Gastrocnemius medialis (tissue), 4 donors: ENCODE measurements at regions of chr2 and their contacts with region 1.

Region 1: DNA sequence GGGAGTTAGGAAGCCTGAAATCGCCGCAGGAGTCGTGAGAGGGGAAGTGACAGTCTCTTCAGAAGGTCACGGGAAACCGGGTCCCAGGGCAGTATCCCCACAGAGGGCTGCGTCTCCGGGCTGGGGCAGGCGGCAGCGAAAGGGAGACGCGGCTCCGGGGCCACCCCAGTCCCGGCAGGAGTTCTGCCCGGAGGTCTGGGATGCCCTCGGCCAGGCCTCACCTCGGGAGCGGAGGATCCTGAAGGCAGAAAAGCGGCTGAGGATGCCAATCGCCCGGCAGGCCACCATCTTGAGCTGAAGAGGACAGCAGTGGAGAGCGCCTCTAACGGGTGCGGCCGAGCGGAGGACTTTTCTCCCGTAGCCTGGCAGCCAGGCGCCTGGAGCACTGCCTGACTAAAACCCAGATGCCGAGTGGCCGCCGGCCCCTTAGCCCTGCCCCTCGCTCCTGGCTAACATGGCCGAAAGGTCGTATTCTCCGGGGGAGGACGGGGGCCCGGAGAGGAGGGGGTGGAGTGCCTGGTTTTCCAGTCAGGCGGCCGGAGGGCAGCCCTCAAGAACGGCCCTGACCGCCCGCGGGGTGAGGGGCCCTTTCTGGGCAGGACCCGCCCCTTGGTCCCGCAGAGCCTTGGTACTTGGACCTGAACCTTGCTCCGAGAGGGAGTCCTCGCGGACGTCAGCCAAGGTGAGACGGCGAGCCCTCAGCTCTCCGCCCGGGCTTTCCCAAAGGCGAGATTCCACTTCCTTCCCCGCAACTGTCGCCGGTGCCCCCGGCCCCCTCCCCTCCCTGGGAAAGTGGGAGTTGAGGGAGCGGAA is at the starts of genes HADHA and HADHB:
- DNase-seq: peak; percentile 91 to 95
- ATAC-seq: peak; percentile 74 to 80
- H3K4me3 ChIP-seq: peak within 1 kb of the TSS; percentile 85 to 96 (median 92)
- H3K27ac ChIP-seq: peak within 1 kb of the TSS; percentile 95 to 98 (median 97)
- H3K4me1 ChIP-seq: peaks cover 50 to 63% of the 10 kb centered on the region in 2 donors
- H3K27me3 ChIP-seq: no peaks in the 10 kb centered on the region
- CTCF ChIP-seq: peak in 3 of 5 experiments; percentile 31 to 47 (median 41)
- POLR2A ChIP-seq: peak; percentile 87 to 91
- total RNA-seq, gene HADHA: 443 to 480 (median 462) TPM
- total RNA-seq, gene HADHB: 719 to 936 (median 781) TPM

Region 2: DNA sequence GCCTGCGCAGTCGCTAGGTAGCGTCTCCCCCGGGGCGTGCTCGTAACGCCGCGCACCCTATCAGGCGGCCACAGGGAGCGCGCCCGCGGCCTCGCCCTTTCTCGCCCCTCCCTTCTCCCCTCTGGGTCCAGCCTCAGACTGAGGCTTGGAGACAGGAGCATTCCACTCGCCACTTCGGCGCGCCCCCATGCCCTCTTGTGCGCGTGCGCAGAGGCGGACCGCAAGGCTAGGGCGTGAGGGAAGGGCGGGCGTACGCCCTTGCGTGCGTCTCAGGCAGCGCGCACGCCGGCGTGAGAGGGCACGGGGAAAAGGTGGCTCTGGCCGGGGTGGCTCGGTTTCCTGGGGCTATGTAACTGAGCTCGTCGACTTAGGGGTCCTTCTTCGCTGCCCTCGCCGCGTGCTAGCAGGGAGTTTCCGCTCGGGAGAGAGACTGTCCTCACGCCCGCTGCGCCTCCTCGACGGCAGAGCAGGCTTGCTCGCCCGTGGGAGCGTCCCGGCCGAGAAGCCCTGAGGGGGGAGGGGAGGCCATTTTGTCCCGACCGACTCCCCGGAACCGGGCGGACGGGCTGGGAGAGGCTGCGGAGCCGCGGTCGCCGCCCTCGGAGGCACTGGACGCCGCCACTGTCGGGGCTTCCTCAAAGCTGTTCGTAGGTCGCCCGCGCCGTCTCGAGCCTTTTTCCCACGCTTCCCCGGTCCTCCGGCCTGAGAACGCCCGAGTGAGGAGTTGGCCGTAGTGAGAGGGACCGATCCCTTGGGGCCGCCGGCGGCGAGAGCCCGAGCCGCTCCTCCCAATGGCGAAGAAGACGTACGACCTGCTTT is 210.5 kb before region 1 on chr2 and contains the start of gene RAB10:
- in situ Hi-C with region 1: no loop called
- intact Hi-C with region 1: loop called (anchors 2 kb)
- DNase-seq: peak; percentile 98 to 99
- ATAC-seq: peak; percentile 82 to 85
- H3K4me3 ChIP-seq: peak within 1 kb of the TSS; percentile 83 to 99 (median 92)
- H3K27ac ChIP-seq: peak within 1 kb of the TSS; percentile 99 to 100 (median 99)
- H3K4me1 ChIP-seq: peaks cover 29 to 38% of the 10 kb centered on the region in 2 donors
- H3K27me3 ChIP-seq: no peaks in the 10 kb centered on the region
- CTCF ChIP-seq: peak in 2 of 5 experiments; percentile 17 to 21
- POLR2A ChIP-seq: peak; percentile 99 to 100
- total RNA-seq, gene RAB10: 138 to 234 (median 168) TPM

Region 3: GRCh38 chr2:26122630-26123029 is 121.9 kb before region 1 on chr2:
- in situ Hi-C with region 1: no loop called
- intact Hi-C with region 1: no loop called
- DNase-seq: no peak
- ATAC-seq: peak; percentile 31 to 45
- H3K4me3 ChIP-seq: peak overlapping the region in 1 of 4 donors; percentile 17
- H3K27ac ChIP-seq: peak overlapping the region; percentile 77 to 95 (median 86)
- H3K4me1 ChIP-seq: peaks cover 83 to 85% of the 10 kb centered on the region in 2 donors
- H3K27me3 ChIP-seq: no peaks in the 10 kb centered on the region
- CTCF ChIP-seq: no peak
- POLR2A ChIP-seq: no peak

Region 4: GRCh38 chr2:26274058-26274613 is 29.6 kb after region 1 on chr2:
- in situ Hi-C with region 1: no loop called
- intact Hi-C with region 1: loop called (anchors 1 kb)
- DNase-seq: peak; percentile 64 to 81
- ATAC-seq: peak; percentile 96 to 98
- H3K4me3 ChIP-seq: peak overlapping the region in 2 of 4 donors; percentile 8 to 15
- H3K27ac ChIP-seq: peak overlapping the region; percentile 81 to 84 (median 82)
- H3K4me1 ChIP-seq: peaks cover 32 to 35% of the 10 kb centered on the region in 2 donors
- H3K27me3 ChIP-seq: no peaks in the 10 kb centered on the region
- CTCF ChIP-seq: no peak
- POLR2A ChIP-seq: no peak

Region 5: GRCh38 chr2:26299471-26300101 is 55.1 kb after region 1 on chr2:
- in situ Hi-C with region 1: no loop called
- intact Hi-C with region 1: loop called (anchors 1 kb)
- DNase-seq: no peak
- ATAC-seq: no peak
- H3K4me3 ChIP-seq: peak overlapping the region; percentile 56 to 68 (median 64)
- H3K27ac ChIP-seq: peak overlapping the region; percentile 49 to 69 (median 58)
- H3K4me1 ChIP-seq: peaks cover 3 to 9% of the 10 kb centered on the region in 2 donors
- H3K27me3 ChIP-seq: no peaks in the 10 kb centered on the region
- CTCF ChIP-seq: no peak
- POLR2A ChIP-seq: no peak

Region 6: DNA sequence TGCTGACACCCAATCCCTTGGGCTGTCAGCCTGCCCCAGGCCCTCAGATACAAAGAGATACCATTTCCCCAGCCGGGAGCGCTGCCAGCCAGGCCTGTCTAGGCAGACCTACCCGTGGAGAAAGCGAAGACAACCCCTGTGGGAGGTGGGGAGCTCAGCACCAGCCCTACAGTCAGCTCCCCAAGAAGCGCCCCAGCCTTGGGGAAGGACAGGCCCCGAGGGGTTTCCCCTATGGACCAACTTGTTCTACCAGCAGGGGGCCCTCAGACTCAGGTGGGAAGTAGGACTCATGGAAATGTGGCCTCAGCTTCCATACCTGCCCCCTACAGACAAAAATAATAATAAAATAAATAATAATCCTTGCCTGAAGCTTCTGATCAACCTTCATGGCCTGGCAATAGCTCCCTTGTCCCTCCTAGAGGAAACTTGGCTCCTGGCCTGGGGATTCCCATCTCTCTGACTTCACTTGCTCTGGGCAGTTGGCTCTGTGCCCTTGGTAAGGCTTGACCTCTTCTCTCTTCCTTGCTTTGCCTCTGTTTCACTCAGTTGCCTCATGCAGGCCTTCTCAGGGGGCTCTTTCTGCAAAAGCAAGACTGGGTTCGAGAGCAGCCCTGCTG is 526.6 kb after region 1 on chr2:
- in situ Hi-C with region 1: no loop called
- intact Hi-C with region 1: loop called (anchors 5 kb)
- DNase-seq: peak; percentile 87 to 90
- ATAC-seq: peak; percentile 37 to 41
- H3K4me3 ChIP-seq: peak overlapping the region in 3 of 4 donors; percentile 0 to 36 (median 26)
- H3K27ac ChIP-seq: peak overlapping the region; percentile 93 to 99 (median 96)
- H3K4me1 ChIP-seq: peaks cover 55 to 66% of the 10 kb centered on the region in 2 donors
- H3K27me3 ChIP-seq: no peaks in the 10 kb centered on the region
- CTCF ChIP-seq: peak in 4 of 5 experiments; percentile 19 to 52 (median 44)
- POLR2A ChIP-seq: no peak